HEK293T (cell line): ENCODE measurements at regions of chrX and their contacts with region 1.

Region 1: DNA sequence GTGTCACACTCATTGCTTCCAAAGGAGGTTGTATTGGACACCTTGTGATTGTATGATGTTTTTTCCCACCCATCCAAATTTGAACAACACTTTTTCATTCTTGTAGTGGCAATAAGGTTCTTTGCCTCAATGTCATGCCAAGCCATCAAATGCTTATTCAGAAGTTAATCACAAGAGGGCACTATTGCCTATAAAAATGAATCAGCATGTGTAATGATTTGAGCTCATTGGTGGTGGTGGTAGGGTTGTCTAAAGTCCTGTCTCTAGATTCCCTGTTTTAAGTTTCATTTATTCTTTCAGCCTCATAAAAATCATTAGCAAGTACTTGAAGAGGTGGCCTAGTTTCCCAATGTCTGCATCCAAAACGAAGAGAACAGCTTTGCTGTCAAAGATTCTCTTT is 37.0 kb downstream of the IRS4 start:
- DNase-seq: peak; percentile 52

Region 2: DNA sequence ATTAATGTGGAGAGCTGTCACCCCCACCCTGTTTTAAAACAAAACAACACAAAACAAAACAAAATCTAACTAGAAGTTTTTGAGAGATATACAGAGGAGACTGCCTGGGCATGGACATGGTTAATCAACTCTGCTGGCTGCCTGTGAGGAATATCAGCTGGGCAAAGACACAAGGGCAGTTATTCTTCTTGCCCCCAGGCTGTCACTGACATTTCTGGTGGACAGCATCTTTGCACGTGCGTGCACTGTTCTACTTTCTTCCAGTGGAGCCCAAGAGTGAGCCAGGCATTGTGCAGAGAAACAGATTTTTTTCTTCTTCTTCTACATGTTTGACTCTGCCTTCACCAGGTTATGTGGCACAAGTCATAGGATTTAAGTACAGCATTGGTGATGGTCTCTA is 23.2 kb after region 1 on chrX:
- CTCF ChIA-PET with region 1: no interaction called
- POLR2A ChIA-PET with region 1: no interaction called
- DNase-seq: no peak

Region 3: GRCh38 chrX:109384699-109385098 is 685.3 kb after region 1 on chrX:
- CTCF ChIA-PET with region 1: interaction called, 20 read pairs
- POLR2A ChIA-PET with region 1: no interaction called
- DNase-seq: peak; percentile 33